PC-9 (cell line): ENCODE measurements at regions of chr16 and their contacts with region 1.

Region 1: GRCh38 chr16:30893744-30894539 is at the start of gene BCL7C:
- DNase-seq: peak; percentile 73 to 98
- H3K4me3 ChIP-seq: peak within 1 kb of the TSS; percentile 89
- H3K27ac ChIP-seq: peak within 1 kb of the TSS; percentile 88
- H3K4me1 ChIP-seq: peaks cover 34% of the 10 kb centered on the region
- H3K27me3 ChIP-seq: no peaks in the 10 kb centered on the region
- CTCF ChIP-seq: peak; percentile 47; the same call in 1 of the 2 replicates
- total RNA-seq, gene BCL7C: 59.3 and 66.9 TPM in 2 replicates

Region 2: DNA sequence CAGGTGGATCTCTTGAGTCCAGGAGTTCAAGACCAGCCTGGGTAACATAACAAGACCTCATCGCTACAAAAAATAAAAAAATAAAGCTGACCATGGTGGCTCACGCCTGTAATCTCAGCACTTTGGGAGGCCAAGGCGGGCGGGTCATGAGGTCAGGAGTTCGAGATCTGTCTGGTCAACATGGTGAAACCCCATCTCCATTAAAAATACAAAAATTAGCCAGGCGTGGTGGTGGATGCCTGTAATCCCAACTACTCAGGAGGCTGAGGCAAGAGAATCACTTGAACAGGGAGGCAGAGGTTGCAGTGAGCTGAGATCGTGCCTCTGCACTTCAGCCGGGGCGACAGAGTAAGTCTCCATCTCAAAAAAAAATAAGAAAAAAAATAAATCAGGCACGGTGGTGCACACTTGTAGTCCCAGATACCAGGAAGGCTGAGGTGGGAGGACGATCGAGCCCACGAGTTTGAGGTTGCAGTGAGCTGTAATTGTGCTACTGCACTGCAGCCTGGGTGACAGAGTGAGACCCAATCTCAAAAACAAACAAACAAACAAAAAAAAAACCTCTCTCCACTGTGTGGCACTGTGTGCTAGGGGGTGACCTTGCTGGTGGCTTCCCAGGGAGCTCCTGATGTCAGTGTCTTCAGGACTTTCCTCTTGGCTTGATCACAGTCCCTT is 751.1 kb before region 1 on chr16:
- CTCF ChIA-PET with region 1: interaction called, 12 read pairs
- POLR2A ChIA-PET with region 1: no interaction called
- intact Hi-C with region 1: no loop called
- DNase-seq: peak; percentile 34 to 58
- H3K4me3 ChIP-seq: no peak overlapping the region
- H3K27ac ChIP-seq: no peak overlapping the region
- H3K4me1 ChIP-seq: no peaks in the 10 kb centered on the region
- H3K27me3 ChIP-seq: no peaks in the 10 kb centered on the region
- CTCF ChIP-seq: peak; percentile 60

Region 3: GRCh38 chr16:30698139-30698815 is 195.7 kb before region 1 on chr16:
- CTCF ChIA-PET with region 1: no interaction called
- POLR2A ChIA-PET with region 1: interaction called, 23 read pairs
- intact Hi-C with region 1: loop called (anchors 2 kb)
- DNase-seq: peak; percentile 91 to 99
- H3K4me3 ChIP-seq: peak overlapping the region; percentile 96
- H3K27ac ChIP-seq: peak overlapping the region; percentile 95
- H3K4me1 ChIP-seq: peaks cover 22% of the 10 kb centered on the region
- H3K27me3 ChIP-seq: no peaks in the 10 kb centered on the region
- CTCF ChIP-seq: no peak

Region 4: GRCh38 chr16:30775392-30776188 is 118.4 kb before region 1 on chr16:
- CTCF ChIA-PET with region 1: no interaction called
- POLR2A ChIA-PET with region 1: no interaction called
- intact Hi-C with region 1: no loop called
- DNase-seq: peak; percentile 71 to 79
- H3K4me3 ChIP-seq: peak overlapping the region; percentile 84
- H3K27ac ChIP-seq: peak overlapping the region; percentile 73
- H3K4me1 ChIP-seq: peaks cover 8% of the 10 kb centered on the region; the same call in 1 of the 2 replicates
- H3K27me3 ChIP-seq: no peaks in the 10 kb centered on the region
- CTCF ChIP-seq: no peak; the same call in 1 of the 2 replicates

Region 5: DNA sequence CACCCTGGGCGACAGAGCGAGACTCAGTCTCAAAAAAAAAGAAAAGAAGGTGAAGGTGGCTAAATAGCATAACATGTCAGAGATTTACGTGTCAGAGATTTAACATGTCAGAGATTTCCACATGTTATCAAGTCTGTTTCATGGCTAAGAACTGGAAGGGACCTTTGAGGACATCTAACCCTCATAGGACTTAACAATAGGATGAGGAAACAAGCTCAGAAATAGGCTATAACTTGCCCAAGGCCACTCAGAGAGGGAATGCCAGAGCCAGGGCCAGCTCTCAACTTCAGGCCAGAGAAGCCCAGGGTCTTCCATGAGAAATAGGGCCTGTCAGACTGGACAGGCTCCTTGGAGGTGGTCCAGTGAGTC is 80.1 kb before region 1 on chr16:
- CTCF ChIA-PET with region 1: no interaction called
- POLR2A ChIA-PET with region 1: no interaction called
- intact Hi-C with region 1: loop called (anchors 2 kb)
- DNase-seq: no peak
- H3K4me3 ChIP-seq: peak overlapping the region; percentile 53
- H3K27ac ChIP-seq: peak overlapping the region; percentile 16; the same call in 1 of the 2 replicates
- H3K4me1 ChIP-seq: peaks cover 9% of the 10 kb centered on the region
- H3K27me3 ChIP-seq: no peaks in the 10 kb centered on the region
- CTCF ChIP-seq: no peak

Region 6: GRCh38 chr16:30874821-30875717 is 18.9 kb before region 1 on chr16:
- CTCF ChIA-PET with region 1: no interaction called
- POLR2A ChIA-PET with region 1: interaction called, 6 read pairs
- intact Hi-C with region 1: loop called (anchors 1 kb)
- DNase-seq: peak; percentile 75 to 94
- H3K4me3 ChIP-seq: peak overlapping the region; percentile 97
- H3K27ac ChIP-seq: peak overlapping the region; percentile 48
- H3K4me1 ChIP-seq: peaks cover 18% of the 10 kb centered on the region
- H3K27me3 ChIP-seq: no peaks in the 10 kb centered on the region
- CTCF ChIP-seq: no peak

Region 7: GRCh38 chr16:30941600-30942425 is 47.9 kb after region 1 on chr16:
- CTCF ChIA-PET with region 1: interaction called, 6 read pairs
- POLR2A ChIA-PET with region 1: interaction called, 10 read pairs
- intact Hi-C with region 1: no loop called
- DNase-seq: peak; percentile 63 to 87
- H3K4me3 ChIP-seq: no peak overlapping the region
- H3K27ac ChIP-seq: no peak overlapping the region
- H3K4me1 ChIP-seq: peaks cover 6% of the 10 kb centered on the region; the same call in 1 of the 2 replicates
- H3K27me3 ChIP-seq: no peaks in the 10 kb centered on the region
- CTCF ChIP-seq: peak; percentile 98